Activated CD4-positive, alpha-beta memory T cell treated with anti-CD3 and anti-CD28 coated beads for 36 hours (primary cell): ENCODE measurements at regions of chr1 and their contacts with region 1.

Region 1: DNA sequence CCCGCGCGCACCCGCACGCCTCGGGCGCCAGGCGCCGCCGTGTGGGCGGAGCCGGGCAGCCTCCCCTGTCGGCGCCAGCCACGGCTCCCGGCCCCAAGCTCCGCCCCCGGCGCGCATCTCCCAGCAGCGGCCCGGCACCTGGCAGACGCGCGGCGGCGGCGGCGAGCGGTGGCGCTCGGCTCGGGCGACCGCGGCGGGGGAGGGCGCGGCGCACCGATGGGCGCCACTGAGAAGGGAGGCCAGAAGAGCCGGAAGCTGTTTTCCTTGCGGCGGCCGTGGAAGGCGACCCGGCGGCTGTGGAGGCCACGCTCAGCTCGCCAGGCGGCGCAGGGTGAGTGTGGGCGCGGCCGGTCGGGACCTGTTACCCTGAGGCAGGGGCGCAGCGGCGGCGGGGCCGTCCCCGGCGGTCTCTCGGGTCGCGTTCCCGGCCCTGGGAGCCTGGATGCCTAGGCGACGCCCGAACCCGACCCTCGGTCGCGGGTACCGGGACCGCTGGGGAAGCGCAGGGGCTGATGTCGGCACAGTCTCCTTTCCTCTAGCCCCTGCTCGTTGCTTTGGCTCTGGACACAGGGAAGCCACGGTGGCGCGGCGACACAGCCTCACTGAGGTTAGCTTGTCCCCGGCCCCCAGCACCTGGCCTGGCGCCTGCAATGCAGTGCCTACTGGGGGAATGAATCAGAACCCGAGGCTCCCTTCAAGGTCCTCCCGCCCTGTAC is 54.9 kb upstream of the DNAJC6 start:
- DNase-seq: peak; percentile 89
- H3K4me3 Mint-ChIP-seq: peak overlapping the region; percentile 84
- H3K27ac Mint-ChIP-seq: no peak overlapping the region
- H3K4me1 Mint-ChIP-seq: peaks cover 16% of the 10 kb centered on the region
- H3K27me3 Mint-ChIP-seq: peaks cover 10% of the 10 kb centered on the region

Region 2: DNA sequence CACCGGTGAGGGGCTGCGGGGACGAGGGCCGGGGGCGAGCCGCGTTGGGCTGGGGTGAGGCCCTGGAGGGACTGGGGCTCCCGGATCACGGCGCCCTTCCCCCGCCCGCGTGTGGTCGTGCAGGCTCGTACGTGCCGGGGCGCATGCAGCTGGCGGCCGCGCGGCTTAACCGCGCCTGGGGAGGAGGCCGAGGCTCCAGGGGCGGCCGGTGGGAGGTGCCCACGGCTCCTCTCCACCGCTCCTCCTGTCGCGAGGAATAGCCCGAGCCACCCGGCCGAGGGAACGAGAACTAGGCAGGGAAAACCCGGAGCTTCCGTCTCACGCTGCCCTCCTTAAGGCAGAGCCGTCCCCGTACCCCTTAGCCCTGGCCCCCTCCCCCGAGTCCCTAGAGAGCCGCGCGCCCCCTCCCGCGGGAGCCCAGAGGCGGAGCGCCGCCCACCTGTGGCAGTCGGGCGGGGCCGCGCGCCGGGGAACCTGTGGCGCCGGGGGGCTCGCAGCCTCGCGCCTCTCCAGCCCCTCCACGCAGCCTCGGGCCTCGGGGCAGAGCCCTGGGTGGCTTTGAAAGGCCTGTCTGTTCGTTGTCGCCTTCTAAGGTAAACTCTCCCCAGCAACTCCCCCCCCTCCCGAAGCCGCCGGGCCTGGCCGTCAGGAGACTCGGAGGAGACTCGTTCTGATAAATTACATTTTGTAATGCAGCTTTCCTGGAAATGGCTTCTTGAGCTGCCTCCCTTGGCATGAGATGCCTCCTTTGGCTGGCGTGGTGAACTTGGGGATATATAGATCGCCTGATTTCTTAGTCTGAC is 105.7 kb before region 1 on chr1:
- CTCF ChIA-PET with region 1: no interaction called
- POLR2A ChIA-PET with region 1: no interaction called
- intact Hi-C with region 1: loop called (anchors 2 kb)
- DNase-seq: peak; percentile 65
- H3K4me3 Mint-ChIP-seq: peak overlapping the region; percentile 76
- H3K27ac Mint-ChIP-seq: no peak overlapping the region
- H3K4me1 Mint-ChIP-seq: peaks cover 14% of the 10 kb centered on the region
- H3K27me3 Mint-ChIP-seq: peaks cover 31% of the 10 kb centered on the region

Region 3: DNA sequence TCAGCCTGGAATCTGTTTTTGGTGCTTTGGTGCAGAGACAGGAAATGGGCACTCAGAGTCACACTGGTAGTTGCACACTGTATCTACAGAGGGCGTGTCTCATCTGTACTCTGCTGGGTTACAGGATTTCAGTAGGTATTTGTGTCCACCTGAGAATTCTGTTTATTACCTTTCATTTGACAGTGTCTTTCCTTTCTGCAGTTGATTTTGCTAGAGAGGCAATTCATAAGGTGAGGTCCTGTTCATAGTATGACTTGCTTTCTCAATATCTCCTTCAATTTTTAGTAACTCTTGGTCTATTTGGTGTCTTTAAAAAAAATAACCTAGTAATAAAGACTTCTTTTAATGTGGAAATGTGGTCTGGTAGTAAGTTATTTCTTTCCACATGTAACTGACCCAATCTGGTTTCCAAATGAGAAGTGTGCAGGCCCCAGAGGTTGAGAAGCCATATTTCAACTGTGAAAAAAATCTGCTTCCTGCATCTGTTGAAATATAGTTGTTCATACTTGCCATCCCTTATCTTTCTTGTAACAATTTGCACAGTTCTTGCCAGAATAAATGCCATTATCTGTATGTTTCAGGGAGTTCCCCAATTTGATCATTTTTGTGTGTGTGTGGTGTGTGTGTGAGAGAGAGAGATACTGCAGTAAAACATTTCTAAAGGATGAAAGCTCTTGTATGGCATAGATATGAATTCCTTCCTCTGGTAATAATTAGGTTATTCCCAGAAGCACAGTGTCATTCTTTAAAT is 23.6 kb before region 1 on chr1:
- CTCF ChIA-PET with region 1: interaction called, 10 read pairs
- POLR2A ChIA-PET with region 1: no interaction called
- intact Hi-C with region 1: loop called (anchors 2 kb)
- DNase-seq: peak; percentile 24
- H3K4me3 Mint-ChIP-seq: no peak overlapping the region
- H3K27ac Mint-ChIP-seq: peak overlapping the region; percentile 16
- H3K4me1 Mint-ChIP-seq: peaks cover 17% of the 10 kb centered on the region
- H3K27me3 Mint-ChIP-seq: peaks cover 7% of the 10 kb centered on the region

Region 4: DNA sequence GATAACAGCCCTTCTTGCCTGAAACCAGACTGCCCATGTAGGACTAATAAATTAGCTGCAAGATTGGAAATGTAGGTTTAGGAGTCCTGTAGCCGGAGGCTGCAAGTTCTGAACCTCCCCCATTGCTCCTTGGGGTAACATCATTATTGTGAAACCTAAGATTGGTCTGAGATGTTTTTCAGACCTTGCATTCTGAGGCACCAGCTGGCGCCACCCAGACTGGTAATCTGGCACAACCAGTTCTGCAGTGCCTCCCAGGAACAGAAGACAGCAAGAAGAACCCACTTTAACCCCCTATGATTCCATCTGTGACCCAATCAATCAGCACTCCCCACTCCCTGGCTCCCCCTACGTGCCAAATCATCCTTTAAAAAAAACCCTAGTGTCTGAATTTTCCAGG is 43.2 kb after region 1 on chr1:
- CTCF ChIA-PET with region 1: no interaction called
- POLR2A ChIA-PET with region 1: no interaction called
- intact Hi-C with region 1: no loop called
- DNase-seq: no peak
- H3K4me3 Mint-ChIP-seq: no peak overlapping the region
- H3K27ac Mint-ChIP-seq: no peak overlapping the region
- H3K4me1 Mint-ChIP-seq: no peaks in the 10 kb centered on the region
- H3K27me3 Mint-ChIP-seq: no peaks in the 10 kb centered on the region